PC-3 (cell line): ENCODE measurements at regions of chr10 and their contacts with region 1.

Region 1: GRCh38 chr10:17043586-17043985 is 86.0 kb downstream of the CUBN start:
- DNase-seq: no peak
- ATAC-seq: no peak
- H3K4me3 ChIP-seq: no peak overlapping the region
- H3K27ac ChIP-seq: no peak overlapping the region
- H3K4me1 ChIP-seq: 0 out of 2 replicates have a peak, but pooled peaks cover 3% of the 10 kb centered on the region
- H3K27me3 ChIP-seq: no peaks in the 10 kb centered on the region
- CTCF ChIP-seq: no peak

Region 2: DNA sequence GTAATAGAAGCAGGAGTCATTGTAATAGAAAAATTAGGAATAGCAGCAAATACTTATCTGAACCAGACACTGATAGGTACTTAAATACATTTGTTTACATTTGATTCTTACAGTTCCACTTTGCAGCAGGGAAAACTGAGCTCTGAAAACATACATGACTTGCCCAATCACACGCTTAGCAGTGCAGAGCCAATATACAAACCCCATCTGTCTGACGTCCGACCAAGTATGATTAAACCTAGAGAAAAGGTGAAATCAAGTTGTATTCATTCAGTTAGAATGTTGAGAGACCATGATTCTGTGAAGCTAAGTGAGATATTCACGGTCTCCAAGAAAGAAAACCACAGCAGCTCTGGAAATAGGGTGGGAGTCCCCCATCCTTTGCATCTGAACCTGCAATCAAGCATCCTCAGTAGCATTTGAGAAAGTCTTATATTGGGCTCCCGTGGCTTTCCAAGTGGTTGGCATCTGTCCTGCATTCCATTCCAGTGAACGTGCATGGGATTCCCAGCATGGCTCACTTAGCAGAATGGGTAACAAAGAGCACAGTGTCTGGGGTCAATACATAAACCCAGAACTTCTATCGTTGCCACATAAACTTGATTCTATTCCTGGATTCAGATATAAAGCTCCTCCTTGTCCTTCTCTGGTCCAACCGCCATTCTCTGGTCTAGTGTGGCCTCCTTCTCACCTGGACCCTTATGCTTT is 77.7 kb before region 1 on chr10:
- CTCF ChIA-PET with region 1: no interaction called
- POLR2A ChIA-PET with region 1: no interaction called
- intact Hi-C with region 1: no loop called
- DNase-seq: peak; percentile 91
- ATAC-seq: peak; percentile 90
- H3K4me3 ChIP-seq: no peak overlapping the region
- H3K27ac ChIP-seq: peak overlapping the region; percentile 89
- H3K4me1 ChIP-seq: peaks cover 33% of the 10 kb centered on the region
- H3K27me3 ChIP-seq: no peaks in the 10 kb centered on the region
- CTCF ChIP-seq: no peak

Region 3: GRCh38 chr10:17128261-17128660 is 84.7 kb after region 1 on chr10:
- CTCF ChIA-PET with region 1: no interaction called
- POLR2A ChIA-PET with region 1: no interaction called
- intact Hi-C with region 1: no loop called
- DNase-seq: no peak
- ATAC-seq: no peak
- H3K4me3 ChIP-seq: no peak overlapping the region
- H3K27ac ChIP-seq: no peak overlapping the region
- H3K4me1 ChIP-seq: peaks cover 7% of the 10 kb centered on the region
- H3K27me3 ChIP-seq: no peaks in the 10 kb centered on the region
- CTCF ChIP-seq: no peak

Region 4: GRCh38 chr10:17238445-17239291 is 195.1 kb after region 1 on chr10:
- CTCF ChIA-PET with region 1: interaction called, 4 read pairs
- POLR2A ChIA-PET with region 1: interaction called, 12 read pairs
- intact Hi-C with region 1: no loop called
- DNase-seq: no peak
- ATAC-seq: peak; percentile 60
- H3K4me3 ChIP-seq: no peak overlapping the region
- H3K27ac ChIP-seq: no peak overlapping the region
- H3K4me1 ChIP-seq: 0 out of 2 replicates have a peak, but pooled peaks cover 3% of the 10 kb centered on the region
- H3K27me3 ChIP-seq: no peaks in the 10 kb centered on the region
- CTCF ChIP-seq: no peak